CD8-positive, alpha-beta T cell (primary cell): ENCODE measurements at regions of chr22 and their contacts with region 1.

Region 1: DNA sequence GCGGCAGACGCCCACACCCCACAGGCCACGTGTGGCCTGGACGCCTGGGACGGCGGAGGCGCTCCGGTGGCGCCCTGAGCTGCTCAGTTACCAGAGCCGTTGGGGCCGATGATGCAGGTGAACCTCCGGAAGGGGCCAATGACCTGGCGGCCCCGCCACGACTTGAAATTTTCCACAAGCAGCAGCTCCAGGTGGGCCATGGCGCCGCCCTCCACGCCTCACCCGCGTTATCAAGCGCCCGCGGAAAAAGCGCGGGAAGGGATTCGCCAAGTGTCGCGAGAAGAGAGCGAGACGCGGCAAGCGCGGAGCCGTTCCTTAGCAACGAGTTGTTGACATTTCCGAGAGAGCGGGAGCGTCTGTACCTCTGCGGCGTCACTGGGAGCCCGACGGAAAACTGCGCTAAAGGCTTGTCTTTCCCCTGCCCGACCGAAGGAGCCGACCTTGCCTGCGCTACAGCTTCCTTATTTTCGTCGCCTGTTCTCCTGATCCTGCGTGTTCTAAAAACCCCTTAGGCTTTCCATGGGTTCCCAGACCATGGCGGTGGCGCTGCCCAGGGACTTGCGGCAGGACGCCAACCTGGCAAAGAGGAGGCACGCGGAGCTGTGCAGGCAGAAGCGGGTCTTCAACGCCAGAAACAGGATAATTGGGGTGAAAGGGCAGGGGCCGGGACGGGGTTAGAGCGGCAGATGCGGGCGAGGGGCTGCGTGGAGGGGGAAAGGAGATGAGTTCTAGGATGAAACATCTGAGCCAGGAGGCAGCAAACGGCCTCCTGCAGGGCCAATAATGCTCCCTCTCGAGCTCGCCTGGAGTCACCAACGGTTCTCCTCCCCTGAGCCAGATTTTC is at the starts of genes RIBC2 and SMC1B:
- DNase-seq: peak; percentile 58 to 89 (median 78)
- ATAC-seq: peak; percentile 88
- H3K4me3 ChIP-seq: peak within 1 kb of the TSS; percentile 39 to 57
- H3K4me3 Mint-ChIP-seq: peak within 1 kb of the TSS; percentile 84
- H3K27ac ChIP-seq: peak within 1 kb of the TSS in 1 of 2 experiments; percentile 70
- H3K27ac Mint-ChIP-seq: peak within 1 kb of the TSS; percentile 38
- H3K4me1 ChIP-seq: peaks cover 9% of the 10 kb centered on the region
- H3K4me1 Mint-ChIP-seq: peaks cover 15% of the 10 kb centered on the region
- H3K27me3 ChIP-seq: no peaks in the 10 kb centered on the region
- H3K27me3 Mint-ChIP-seq: no peaks in the 10 kb centered on the region
- CTCF ChIP-seq: no peak
- total RNA-seq, gene RIBC2: 0.67 to 0.98 TPM
- total RNA-seq, gene SMC1B: not detected

Region 2: GRCh38 chr22:44862981-44863736 is 550.4 kb before region 1 on chr22:
- CTCF ChIA-PET with region 1: no interaction called
- POLR2A ChIA-PET with region 1: no interaction called
- intact Hi-C with region 1: no loop called
- DNase-seq: no peak
- ATAC-seq: no peak
- H3K4me3 ChIP-seq: no peak overlapping the region
- H3K4me3 Mint-ChIP-seq: no peak overlapping the region
- H3K27ac ChIP-seq: no peak overlapping the region
- H3K27ac Mint-ChIP-seq: no peak overlapping the region
- H3K4me1 ChIP-seq: no peaks in the 10 kb centered on the region
- H3K4me1 Mint-ChIP-seq: no peaks in the 10 kb centered on the region
- H3K27me3 ChIP-seq: no peaks in the 10 kb centered on the region
- H3K27me3 Mint-ChIP-seq: peaks cover 10% of the 10 kb centered on the region
- CTCF ChIP-seq: no peak

Region 3: GRCh38 chr22:45344334-45344733 is 69.3 kb before region 1 on chr22:
- CTCF ChIA-PET with region 1: no interaction called
- POLR2A ChIA-PET with region 1: no interaction called
- intact Hi-C with region 1: loop called in 1 of 2 experiments (anchors 5 kb)
- DNase-seq: no peak
- ATAC-seq: no peak
- H3K4me3 ChIP-seq: no peak overlapping the region
- H3K4me3 Mint-ChIP-seq: no peak overlapping the region
- H3K27ac ChIP-seq: no peak overlapping the region
- H3K27ac Mint-ChIP-seq: peak overlapping the region; percentile 52
- H3K4me1 ChIP-seq: peaks cover 19% of the 10 kb centered on the region
- H3K4me1 Mint-ChIP-seq: peaks cover 24% of the 10 kb centered on the region
- H3K27me3 ChIP-seq: no peaks in the 10 kb centered on the region
- H3K27me3 Mint-ChIP-seq: no peaks in the 10 kb centered on the region
- CTCF ChIP-seq: no peak

Region 4: DNA sequence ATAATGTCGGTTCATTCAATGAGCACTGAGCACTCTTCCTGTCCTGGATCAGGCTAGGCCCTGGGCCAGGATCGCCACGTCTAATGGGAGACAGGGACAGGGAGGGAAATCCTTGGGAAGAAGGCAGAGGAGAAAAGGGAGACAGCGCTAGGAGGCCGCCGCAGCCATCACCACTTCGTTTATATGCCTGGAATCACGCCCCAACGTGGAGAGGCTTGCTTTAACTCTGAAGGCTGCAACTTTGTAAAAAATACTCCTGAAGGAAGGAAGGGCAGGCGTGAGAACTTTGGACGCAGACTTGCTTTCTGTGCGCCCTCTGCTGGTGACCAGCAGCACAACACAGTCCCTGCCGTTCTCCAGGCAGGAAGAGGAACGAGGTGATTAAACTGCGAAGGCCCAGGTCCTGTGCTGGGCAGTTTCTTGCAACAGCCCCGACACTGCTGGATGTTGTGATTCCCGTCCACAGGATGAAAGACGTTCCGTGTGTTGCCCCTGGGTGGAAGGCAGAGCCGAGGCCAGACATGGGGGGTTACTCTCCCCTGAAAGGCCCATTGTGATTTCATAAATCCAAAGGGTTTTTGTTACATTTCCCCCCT is 22.1 kb after region 1 on chr22:
- CTCF ChIA-PET with region 1: no interaction called
- POLR2A ChIA-PET with region 1: no interaction called
- intact Hi-C with region 1: loop called in 1 of 2 experiments (anchors 2 kb)
- DNase-seq: peak; percentile 57 to 89 (median 83)
- ATAC-seq: peak; percentile 97
- H3K4me3 ChIP-seq: no peak overlapping the region
- H3K4me3 Mint-ChIP-seq: no peak overlapping the region
- H3K27ac ChIP-seq: no peak overlapping the region
- H3K27ac Mint-ChIP-seq: peak overlapping the region; percentile 10
- H3K4me1 ChIP-seq: peaks cover 6% of the 10 kb centered on the region
- H3K4me1 Mint-ChIP-seq: peaks cover 12% of the 10 kb centered on the region
- H3K27me3 ChIP-seq: no peaks in the 10 kb centered on the region
- H3K27me3 Mint-ChIP-seq: no peaks in the 10 kb centered on the region
- CTCF ChIP-seq: peak; percentile 95

Region 5: DNA sequence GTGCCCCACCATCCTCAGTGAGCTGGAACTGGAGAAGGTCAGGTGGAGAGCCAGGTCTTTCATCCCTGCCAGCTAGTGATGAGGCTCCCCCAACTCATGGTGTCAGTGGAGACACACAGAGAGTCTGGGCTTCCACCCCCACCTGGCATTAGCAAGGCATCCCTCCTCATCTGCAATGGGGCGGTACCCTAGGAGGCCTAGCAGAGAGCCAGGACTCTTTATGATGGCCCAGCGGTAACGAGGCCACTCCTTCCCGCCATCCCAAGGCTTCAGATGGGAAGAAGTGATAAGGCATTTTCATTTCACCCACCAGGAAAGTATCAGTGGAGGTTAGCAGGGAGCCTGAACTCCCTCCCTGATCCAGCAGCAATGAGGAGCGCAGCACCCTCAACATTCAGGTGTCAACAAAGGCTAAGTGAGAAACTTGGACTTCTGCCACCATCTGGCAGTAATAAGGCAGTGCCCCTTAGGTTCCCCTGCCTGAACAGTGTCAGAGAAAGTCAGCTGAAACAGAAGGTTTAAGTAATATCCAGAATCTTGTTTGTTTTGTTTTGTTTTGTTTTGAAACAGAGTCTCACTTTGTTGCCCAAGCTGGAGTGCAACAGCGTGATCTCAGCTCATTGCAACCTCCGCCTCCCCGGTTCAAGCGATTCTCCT is 48.6 kb after region 1 on chr22:
- CTCF ChIA-PET with region 1: no interaction called
- POLR2A ChIA-PET with region 1: no interaction called
- intact Hi-C with region 1: no loop called
- DNase-seq: peak in 1 of 9 experiments; percentile 12
- ATAC-seq: no peak
- H3K4me3 ChIP-seq: no peak overlapping the region
- H3K4me3 Mint-ChIP-seq: no peak overlapping the region
- H3K27ac ChIP-seq: no peak overlapping the region
- H3K27ac Mint-ChIP-seq: no peak overlapping the region
- H3K4me1 ChIP-seq: no peaks in the 10 kb centered on the region
- H3K4me1 Mint-ChIP-seq: no peaks in the 10 kb centered on the region
- H3K27me3 ChIP-seq: no peaks in the 10 kb centered on the region
- H3K27me3 Mint-ChIP-seq: no peaks in the 10 kb centered on the region
- CTCF ChIP-seq: no peak